Activated CD8-positive, alpha-beta T cell treated with anti-CD3 and anti-CD28 coated beads for 36 hours (primary cell): ENCODE measurements at regions of chr1 and their contacts with region 1.

Region 1: DNA sequence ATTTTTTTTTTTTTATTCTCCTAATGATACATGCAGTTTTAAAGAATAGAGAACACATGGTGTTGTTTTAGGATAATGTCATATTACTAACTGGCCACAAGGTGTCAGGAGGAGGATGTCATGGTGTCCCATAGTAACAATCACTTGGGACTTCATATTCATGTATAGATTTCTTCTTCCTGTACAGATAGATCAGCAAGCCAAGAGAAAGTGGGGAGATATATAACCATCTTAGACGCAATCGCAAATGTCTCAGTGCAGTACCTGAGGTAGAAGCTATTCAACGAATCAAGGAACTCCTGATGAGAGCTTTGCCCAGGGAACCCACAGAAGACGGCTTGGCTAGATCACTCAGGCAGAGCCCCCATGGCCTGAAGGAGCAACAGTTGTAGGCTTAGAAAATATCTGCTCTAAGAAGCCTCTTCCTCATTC is 12.3 kb downstream of the OR2T11 start:
- DNase-seq: no peak
- ATAC-seq: peak; percentile 92
- H3K4me3 Mint-ChIP-seq: no peak overlapping the region
- H3K27ac Mint-ChIP-seq: no peak overlapping the region
- H3K4me1 Mint-ChIP-seq: peaks cover 2% of the 10 kb centered on the region
- H3K27me3 Mint-ChIP-seq: no peaks in the 10 kb centered on the region
- CTCF ChIP-seq: peak; percentile 70

Region 2: GRCh38 chr1:248404024-248404423 is 218.6 kb before region 1 on chr1:
- CTCF ChIA-PET with region 1: interaction called, 8 read pairs
- POLR2A ChIA-PET with region 1: no interaction called
- intact Hi-C with region 1: loop called (anchors 5 kb)
- DNase-seq: no peak
- ATAC-seq: no peak
- H3K4me3 Mint-ChIP-seq: no peak overlapping the region
- H3K27ac Mint-ChIP-seq: no peak overlapping the region
- H3K4me1 Mint-ChIP-seq: no peaks in the 10 kb centered on the region
- H3K27me3 Mint-ChIP-seq: no peaks in the 10 kb centered on the region
- CTCF ChIP-seq: peak; percentile 42

Region 3: DNA sequence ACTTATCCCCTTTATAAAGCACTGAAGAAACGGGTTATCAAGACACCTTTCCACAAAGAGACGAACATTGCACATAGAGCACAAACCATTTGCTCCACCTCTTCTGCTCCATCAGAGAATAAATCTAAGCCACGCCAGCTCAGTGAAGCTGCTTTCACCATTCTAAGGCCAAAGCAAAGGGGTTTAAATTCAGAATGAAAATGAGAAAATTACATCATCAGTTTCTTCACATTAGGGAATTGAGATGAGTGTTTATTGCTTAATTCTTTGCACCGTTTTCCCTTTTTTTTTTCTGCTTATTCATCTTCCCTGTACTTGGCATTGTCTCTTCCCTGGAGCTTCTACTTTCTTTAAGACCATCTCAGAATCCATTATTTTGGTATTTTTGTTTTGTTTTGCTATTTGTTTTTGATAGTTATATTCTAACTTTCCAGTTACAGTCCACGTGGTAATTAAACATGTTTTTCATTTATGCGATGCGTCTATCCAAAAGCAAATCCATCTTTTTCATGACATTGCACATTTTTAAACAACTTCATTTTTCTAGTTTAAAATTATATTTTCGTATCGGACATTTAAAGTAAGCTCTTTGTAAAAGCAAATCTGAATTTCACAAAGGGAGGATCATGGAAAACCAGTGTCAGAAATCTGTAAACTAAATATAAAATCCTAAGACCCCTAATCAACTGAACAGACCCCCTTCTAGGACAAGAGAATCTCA is 46.2 kb before region 1 on chr1:
- CTCF ChIA-PET with region 1: no interaction called
- POLR2A ChIA-PET with region 1: no interaction called
- intact Hi-C with region 1: no loop called
- DNase-seq: no peak
- ATAC-seq: no peak
- H3K4me3 Mint-ChIP-seq: no peak overlapping the region
- H3K27ac Mint-ChIP-seq: no peak overlapping the region
- H3K4me1 Mint-ChIP-seq: peaks cover 5% of the 10 kb centered on the region
- H3K27me3 Mint-ChIP-seq: peaks cover 2% of the 10 kb centered on the region
- CTCF ChIP-seq: no peak

Region 4: DNA sequence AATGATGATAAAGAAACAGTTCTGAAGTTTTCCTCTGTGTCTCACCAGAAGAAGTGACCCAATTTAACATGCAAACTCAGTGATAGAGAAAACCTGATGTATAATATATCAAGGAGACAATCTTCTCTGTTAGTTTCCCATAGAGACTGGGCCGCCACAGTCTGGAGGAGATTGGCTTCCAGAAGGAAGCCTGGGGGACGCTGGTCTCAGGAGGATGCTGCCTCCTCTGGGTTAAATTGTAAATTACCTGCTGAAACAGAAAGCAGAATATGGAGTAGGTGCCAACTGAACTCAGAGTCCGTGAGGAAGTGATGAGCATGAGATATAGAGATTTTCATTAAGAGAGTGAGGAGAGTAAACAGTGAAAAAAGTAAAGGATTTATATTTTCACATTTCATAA is 64.2 kb after region 1 on chr1:
- CTCF ChIA-PET with region 1: interaction called, 4 read pairs
- POLR2A ChIA-PET with region 1: no interaction called
- intact Hi-C with region 1: loop called (anchors 5 kb)
- DNase-seq: peak; percentile 28
- ATAC-seq: peak; percentile 53
- H3K4me3 Mint-ChIP-seq: no peak overlapping the region
- H3K27ac Mint-ChIP-seq: no peak overlapping the region
- H3K4me1 Mint-ChIP-seq: peaks cover 3% of the 10 kb centered on the region
- H3K27me3 Mint-ChIP-seq: peaks cover 5% of the 10 kb centered on the region
- CTCF ChIP-seq: peak; percentile 66

Region 5: GRCh38 chr1:248807067-248807737 is 184.6 kb after region 1 on chr1:
- CTCF ChIA-PET with region 1: interaction called, 89 read pairs
- POLR2A ChIA-PET with region 1: no interaction called
- intact Hi-C with region 1: loop called (anchors 2 kb)
- DNase-seq: peak; percentile 66
- ATAC-seq: peak; percentile 92
- H3K4me3 Mint-ChIP-seq: no peak overlapping the region
- H3K27ac Mint-ChIP-seq: no peak overlapping the region
- H3K4me1 Mint-ChIP-seq: peaks cover 11% of the 10 kb centered on the region
- H3K27me3 Mint-ChIP-seq: peaks cover 10% of the 10 kb centered on the region
- CTCF ChIP-seq: peak; percentile 91